ENCODE measurements at regions of chr2 and their contacts with region 1.

Region 1: DNA sequence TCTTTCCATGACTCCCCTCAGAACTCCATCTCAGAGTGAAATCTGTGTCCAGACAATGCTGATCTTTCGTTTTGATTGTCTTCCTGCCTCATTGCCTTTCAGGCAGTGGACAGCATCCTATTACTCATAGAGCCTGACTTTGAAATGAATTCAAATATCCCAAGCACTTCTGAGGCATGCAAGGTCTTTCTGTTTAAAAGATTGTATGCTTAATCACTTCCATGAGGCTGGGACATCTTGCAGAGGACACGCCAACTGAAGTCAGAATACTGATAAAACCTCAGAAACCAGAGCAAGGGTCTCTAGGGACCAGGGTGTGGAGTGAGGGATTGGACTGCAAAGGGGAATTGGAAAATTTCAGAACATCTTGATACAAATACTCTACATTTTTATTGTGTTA is 836.5 kb upstream of the ID2 start:
- DNase-seq: no peak
- ATAC-seq: no peak
- H3K4me3 Mint-ChIP-seq: no peak overlapping the region
- H3K27ac Mint-ChIP-seq: no peak overlapping the region
- H3K4me1 Mint-ChIP-seq: peaks cover 40% of the 10 kb centered on the region
- H3K27me3 Mint-ChIP-seq: peaks cover 6% of the 10 kb centered on the region

Region 2: DNA sequence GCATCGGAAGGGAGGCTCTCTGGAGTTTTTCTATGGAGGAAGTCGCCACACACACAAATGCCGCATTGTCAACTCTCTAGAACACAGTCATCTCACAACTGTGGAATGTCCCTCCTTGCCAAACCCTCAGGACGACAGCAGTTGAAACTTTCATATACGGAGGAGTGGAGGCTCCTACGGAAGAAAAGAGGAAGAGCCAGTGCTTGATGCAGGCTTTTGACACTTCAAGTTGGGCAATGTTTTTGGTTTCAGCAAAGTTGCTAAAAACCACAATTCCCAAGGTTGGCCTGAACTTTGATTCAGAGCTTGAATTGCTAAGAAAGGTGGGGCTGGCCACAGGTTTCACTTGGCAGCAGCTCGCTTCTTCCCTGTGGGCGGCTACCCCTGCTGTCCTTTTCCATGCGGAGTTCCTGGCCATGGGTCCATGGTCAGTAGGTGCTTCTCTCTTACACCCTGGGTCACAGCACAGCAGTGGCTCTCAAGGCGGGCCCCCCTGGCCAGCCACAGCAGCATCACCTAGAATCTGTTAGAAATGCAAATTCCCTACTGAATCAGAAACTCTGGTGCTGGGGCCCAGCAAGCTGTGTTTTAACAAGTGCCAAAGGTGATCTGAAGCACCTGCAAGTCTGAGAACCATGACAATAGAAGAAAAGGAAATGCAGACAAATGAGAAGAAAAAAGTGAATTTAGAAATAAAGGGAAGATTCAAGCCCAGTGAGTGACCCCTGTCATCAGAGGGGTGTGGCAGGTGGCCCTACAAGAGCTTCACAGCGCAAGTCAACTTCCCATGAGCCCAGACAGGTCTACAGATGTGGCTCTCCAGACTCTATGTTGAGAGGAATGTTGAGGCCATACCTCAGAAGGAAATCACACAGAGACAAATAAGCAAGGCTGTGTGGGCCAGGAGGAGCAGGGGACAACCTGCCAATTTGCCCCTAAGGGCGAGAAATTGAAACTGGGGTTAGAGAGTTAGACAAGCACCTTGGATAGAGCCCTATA is 71.7 kb before region 1 on chr2:
- CTCF ChIA-PET with region 1: no interaction called
- POLR2A ChIA-PET with region 1: interaction called, 3 read pairs
- intact Hi-C with region 1: loop called (anchors 5 kb)
- DNase-seq: peak; percentile 66
- ATAC-seq: peak; percentile 76
- H3K4me3 Mint-ChIP-seq: peak overlapping the region; percentile 11
- H3K27ac Mint-ChIP-seq: peak overlapping the region; percentile 64
- H3K4me1 Mint-ChIP-seq: peaks cover 28% of the 10 kb centered on the region
- H3K27me3 Mint-ChIP-seq: peaks cover 3% of the 10 kb centered on the region

Region 3: DNA sequence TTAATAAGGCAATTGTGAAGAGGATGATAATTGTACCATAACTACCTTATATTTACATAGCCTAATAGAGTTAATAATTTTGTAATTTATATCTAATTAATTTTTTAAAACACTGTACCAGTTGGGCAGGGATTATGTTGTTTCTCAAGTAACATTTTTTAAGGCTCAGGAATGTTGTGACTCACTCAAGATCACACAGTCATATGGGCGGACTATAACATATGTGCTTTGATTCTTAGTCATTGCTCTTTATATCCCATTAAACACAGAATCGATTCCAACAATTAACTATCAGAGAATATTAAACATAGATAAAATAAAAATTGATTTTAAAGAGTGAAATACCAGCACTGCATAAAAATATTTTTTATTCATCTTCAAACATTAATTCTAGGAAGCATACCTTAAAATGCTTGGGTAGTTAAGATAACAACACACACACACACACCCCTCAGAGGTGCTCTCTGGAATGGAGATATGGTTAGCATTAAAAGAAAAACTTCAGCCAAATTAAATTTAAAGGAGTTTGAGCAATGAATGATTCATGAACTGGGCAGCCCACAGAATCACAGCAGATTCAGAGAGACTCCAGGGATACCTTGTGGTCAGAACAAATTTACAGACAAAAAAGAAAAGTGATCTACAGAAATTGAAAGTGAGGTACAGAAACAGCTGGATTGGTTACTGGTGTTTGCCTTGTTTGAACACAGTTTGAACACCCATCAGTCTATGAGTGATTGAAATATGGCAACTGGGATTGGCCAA is 32.9 kb before region 1 on chr2:
- CTCF ChIA-PET with region 1: no interaction called
- POLR2A ChIA-PET with region 1: no interaction called
- intact Hi-C with region 1: no loop called
- DNase-seq: no peak
- ATAC-seq: peak; percentile 26
- H3K4me3 Mint-ChIP-seq: no peak overlapping the region
- H3K27ac Mint-ChIP-seq: no peak overlapping the region
- H3K4me1 Mint-ChIP-seq: peaks cover 14% of the 10 kb centered on the region
- H3K27me3 Mint-ChIP-seq: no peaks in the 10 kb centered on the region

Region 4: GRCh38 chr2:7984693-7985353 is 139.5 kb after region 1 on chr2:
- CTCF ChIA-PET with region 1: no interaction called
- POLR2A ChIA-PET with region 1: no interaction called
- intact Hi-C with region 1: loop called in 1 of 2 experiments (anchors 1 kb)
- DNase-seq: no peak
- ATAC-seq: peak; percentile 96
- H3K4me3 Mint-ChIP-seq: peak overlapping the region; percentile 44
- H3K27ac Mint-ChIP-seq: peak overlapping the region; percentile 95
- H3K4me1 Mint-ChIP-seq: peaks cover 33% of the 10 kb centered on the region
- H3K27me3 Mint-ChIP-seq: no peaks in the 10 kb centered on the region

Region 5: DNA sequence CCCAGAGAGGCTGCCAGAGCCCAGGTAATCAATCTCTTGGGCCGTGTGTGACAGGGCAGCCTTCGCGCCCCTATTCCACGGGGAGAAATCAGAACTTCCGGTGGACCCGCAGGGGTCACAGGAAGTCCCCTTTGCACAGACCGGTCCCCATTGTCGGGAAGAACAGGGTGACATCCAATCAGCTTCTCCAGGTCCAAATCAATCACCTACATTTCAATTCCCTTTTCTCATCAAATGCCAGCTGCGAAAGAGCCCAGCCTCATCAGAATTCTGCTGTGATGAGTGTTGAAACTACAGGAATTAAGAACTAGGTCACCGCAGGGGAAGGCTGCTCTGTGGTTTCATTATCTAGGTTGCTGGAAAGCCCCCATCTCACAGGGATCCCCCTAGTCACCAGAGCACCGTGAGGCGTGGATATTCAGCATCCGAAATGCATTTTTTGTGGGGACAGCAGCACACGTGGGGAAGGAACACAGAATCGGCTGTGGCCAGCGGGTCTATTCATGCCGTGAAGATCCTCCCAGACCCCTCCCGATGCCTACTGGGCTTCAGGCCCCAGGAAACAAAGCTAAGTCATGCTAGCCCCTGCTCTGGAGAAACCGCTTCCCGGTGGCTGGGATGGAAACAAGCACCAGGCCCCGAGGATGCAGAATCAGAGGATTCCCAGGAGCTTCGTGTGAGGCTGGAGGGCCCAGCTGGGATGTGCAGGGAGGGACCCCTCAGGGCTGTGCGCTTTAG is 642.8 kb after region 1 on chr2:
- CTCF ChIA-PET with region 1: no interaction called
- POLR2A ChIA-PET with region 1: no interaction called
- intact Hi-C with region 1: loop called in 1 of 2 experiments (anchors 5 kb)
- DNase-seq: peak; percentile 80
- ATAC-seq: peak; percentile 85
- H3K4me3 Mint-ChIP-seq: peak overlapping the region; percentile 72
- H3K27ac Mint-ChIP-seq: peak overlapping the region; percentile 86
- H3K4me1 Mint-ChIP-seq: peaks cover 49% of the 10 kb centered on the region
- H3K27me3 Mint-ChIP-seq: no peaks in the 10 kb centered on the region